ENCODE measurements at regions of chr15 and their contacts with region 1.

Region 1: GRCh38 chr15:88974392-88974791 is 61.2 kb upstream of the MFGE8 start:
- DNase-seq: no peak
- H3K4me3 ChIP-seq: no peak overlapping the region
- H3K27ac ChIP-seq: no peak overlapping the region
- H3K4me1 ChIP-seq: no peaks in the 10 kb centered on the region
- H3K27me3 ChIP-seq: no peaks in the 10 kb centered on the region
- CTCF ChIP-seq: no peak

Region 2: GRCh38 chr15:88865498-88866099 is 108.8 kb before region 1 on chr15:
- CTCF ChIA-PET with region 1: no interaction called
- dilution Hi-C with region 1: no loop called
- in situ Hi-C with region 1: no loop called
- intact Hi-C with region 1: no loop called
- DNase-seq: no peak
- H3K4me3 ChIP-seq: no peak overlapping the region
- H3K27ac ChIP-seq: no peak overlapping the region
- H3K4me1 ChIP-seq: no peaks in the 10 kb centered on the region
- H3K27me3 ChIP-seq: no peaks in the 10 kb centered on the region
- CTCF ChIP-seq: no peak

Region 3: GRCh38 chr15:88932271-88932874 is 42.0 kb before region 1 on chr15:
- CTCF ChIA-PET with region 1: no interaction called
- dilution Hi-C with region 1: loop called (anchors 5 kb)
- in situ Hi-C with region 1: no loop called
- intact Hi-C with region 1: no loop called
- DNase-seq: peak; percentile 19
- H3K4me3 ChIP-seq: no peak overlapping the region
- H3K27ac ChIP-seq: no peak overlapping the region
- H3K4me1 ChIP-seq: no peaks in the 10 kb centered on the region
- H3K27me3 ChIP-seq: no peaks in the 10 kb centered on the region
- CTCF ChIP-seq: no peak

Region 4: DNA sequence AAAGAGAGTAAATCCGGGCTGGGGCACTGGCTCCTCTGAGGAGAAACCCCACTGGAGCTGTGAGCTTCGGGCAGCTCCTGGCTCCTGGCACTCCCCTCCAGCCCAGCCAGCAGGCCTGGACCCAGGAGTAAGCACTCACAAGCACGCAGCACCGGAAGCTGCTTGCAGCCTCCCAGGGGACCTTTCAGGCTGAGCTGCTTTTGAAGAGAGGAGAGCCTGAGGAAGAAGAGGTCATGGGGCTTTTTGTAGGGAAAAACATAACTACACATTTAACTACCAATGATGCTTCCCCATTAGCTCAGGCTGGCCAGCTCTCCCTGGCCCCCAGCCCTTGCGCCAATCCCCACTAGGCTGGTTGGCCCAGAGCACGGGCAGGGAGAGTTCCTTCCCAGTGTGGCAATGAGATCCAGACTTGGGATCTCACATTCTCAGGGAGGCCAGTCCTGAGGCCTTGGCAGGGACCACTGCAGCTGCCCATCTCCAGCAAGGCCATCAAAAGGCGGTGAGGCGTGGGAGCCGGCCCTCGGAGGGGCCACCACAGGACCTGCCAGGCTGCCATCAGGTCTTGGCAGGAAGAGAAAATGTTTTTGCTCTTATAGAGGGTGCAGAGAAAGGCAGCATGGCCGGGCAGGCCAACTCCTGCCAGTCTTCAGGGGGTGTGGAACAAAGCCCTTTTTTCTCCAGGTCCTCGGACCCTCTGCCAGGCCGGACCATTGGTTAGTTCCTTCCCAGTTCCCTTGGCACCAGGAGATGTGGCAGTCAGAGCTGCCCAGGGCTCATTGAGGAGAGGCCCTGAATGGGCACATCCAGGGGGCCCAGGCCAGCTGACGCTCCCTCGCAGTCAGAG is 19.7 kb before region 1 on chr15:
- CTCF ChIA-PET with region 1: interaction called, 10 read pairs
- dilution Hi-C with region 1: no loop called
- in situ Hi-C with region 1: no loop called
- intact Hi-C with region 1: no loop called
- DNase-seq: no peak
- H3K4me3 ChIP-seq: no peak overlapping the region
- H3K27ac ChIP-seq: no peak overlapping the region
- H3K4me1 ChIP-seq: no peaks in the 10 kb centered on the region
- H3K27me3 ChIP-seq: no peaks in the 10 kb centered on the region
- CTCF ChIP-seq: no peak

Region 5: DNA sequence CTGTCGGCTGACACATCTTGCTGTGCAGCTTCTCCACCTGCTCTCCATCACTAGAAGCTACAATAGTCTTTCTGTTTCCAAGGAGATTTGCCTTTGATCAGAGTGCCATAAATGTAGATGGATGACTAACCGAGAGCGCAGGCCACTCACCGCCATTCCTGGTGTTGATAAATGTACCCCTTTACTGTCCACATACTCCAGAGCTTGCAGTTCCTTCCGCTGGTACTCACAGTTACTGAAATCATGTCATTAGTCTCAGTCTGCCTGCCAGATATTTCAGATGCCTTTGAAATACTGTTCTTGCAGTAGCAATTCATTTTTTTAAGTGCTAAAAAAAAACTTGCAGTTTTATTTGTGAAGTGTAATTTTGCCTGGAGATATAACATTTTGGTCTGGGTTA is 1815.1 kb after region 1 on chr15:
- CTCF ChIA-PET with region 1: no interaction called
- dilution Hi-C with region 1: no loop called
- in situ Hi-C with region 1: no loop called
- intact Hi-C with region 1: no loop called
- DNase-seq: no peak
- H3K4me3 ChIP-seq: no peak overlapping the region
- H3K27ac ChIP-seq: no peak overlapping the region
- H3K4me1 ChIP-seq: no peaks in the 10 kb centered on the region
- H3K27me3 ChIP-seq: no peaks in the 10 kb centered on the region
- CTCF ChIP-seq: no peak

Measured in mammary epithelial cell (primary cell).